ENCODE measurements at regions of chr2 and their contacts with region 1.

Region 1: GRCh38 chr2:143110758-143111428 is 18.3 kb upstream of the ARHGAP15 start:
- DNase-seq: peak; percentile 90
- H3K4me3 ChIP-seq: no peak overlapping the region
- H3K27ac ChIP-seq: no peak overlapping the region
- H3K4me1 ChIP-seq: peaks cover 7% of the 10 kb centered on the region
- CTCF ChIP-seq: peak; percentile 99

Region 2: DNA sequence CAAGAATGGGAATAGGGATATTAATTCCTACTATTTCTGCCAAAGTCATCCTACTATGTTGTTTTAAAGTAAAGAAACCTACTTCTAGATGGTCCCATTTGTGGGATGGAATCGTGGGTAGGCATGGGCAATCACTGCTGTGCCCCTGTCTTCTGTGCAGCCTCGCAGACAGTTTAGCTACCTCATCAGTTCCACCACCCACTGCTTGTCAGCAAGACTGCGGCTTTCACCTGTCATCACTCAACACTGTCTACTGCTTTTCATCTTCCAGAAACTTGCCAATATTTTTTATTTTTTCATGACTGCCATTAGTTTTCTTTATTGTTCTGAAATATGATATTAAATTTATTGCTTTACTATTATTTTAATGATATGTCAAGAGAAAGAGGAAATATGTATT is 601.5 kb before region 1 on chr2:
- CTCF ChIA-PET with region 1: no interaction called
- POLR2A ChIA-PET with region 1: no interaction called
- intact Hi-C with region 1: no loop called
- DNase-seq: no peak
- H3K4me3 ChIP-seq: no peak overlapping the region
- H3K27ac ChIP-seq: no peak overlapping the region
- H3K4me1 ChIP-seq: no peaks in the 10 kb centered on the region
- CTCF ChIP-seq: no peak

Region 3: DNA sequence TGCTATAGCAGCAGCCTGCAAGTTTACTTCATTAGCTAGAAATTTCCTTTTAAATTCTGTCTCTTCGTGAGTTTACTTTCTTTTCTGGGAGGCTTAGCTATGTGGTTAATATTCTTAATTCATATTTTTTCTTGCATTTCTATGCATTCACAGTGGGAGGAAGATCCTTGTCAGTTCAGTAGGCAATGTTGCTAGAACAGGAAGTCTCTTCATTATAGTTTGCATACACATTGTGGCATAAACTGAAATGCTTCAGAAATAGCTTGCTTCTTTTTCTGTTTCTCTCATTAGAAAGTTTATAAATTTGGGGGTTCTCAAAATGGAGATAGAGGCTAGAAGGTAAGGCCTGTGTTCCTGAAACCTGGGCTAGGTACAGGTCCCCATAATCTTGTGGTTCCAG is 10.2 kb after region 1 on chr2:
- CTCF ChIA-PET with region 1: interaction called, 3 read pairs
- POLR2A ChIA-PET with region 1: interaction called, 11 read pairs
- intact Hi-C with region 1: no loop called
- DNase-seq: peak; percentile 65
- H3K4me3 ChIP-seq: peak overlapping the region; percentile 28
- H3K27ac ChIP-seq: peak overlapping the region; percentile 31
- H3K4me1 ChIP-seq: peaks cover 16% of the 10 kb centered on the region
- CTCF ChIP-seq: no peak

Region 4: GRCh38 chr2:143217512-143218115 is 106.7 kb after region 1 on chr2:
- CTCF ChIA-PET with region 1: interaction called, 3 read pairs
- POLR2A ChIA-PET with region 1: interaction called, 8 read pairs
- intact Hi-C with region 1: loop called (anchors 1 kb)
- DNase-seq: no peak
- H3K4me3 ChIP-seq: no peak overlapping the region
- H3K27ac ChIP-seq: no peak overlapping the region
- H3K4me1 ChIP-seq: no peaks in the 10 kb centered on the region
- CTCF ChIP-seq: no peak

Region 5: GRCh38 chr2:143357966-143358365 is 247.1 kb after region 1 on chr2:
- CTCF ChIA-PET with region 1: no interaction called
- POLR2A ChIA-PET with region 1: no interaction called
- intact Hi-C with region 1: no loop called
- DNase-seq: no peak
- H3K4me3 ChIP-seq: no peak overlapping the region
- H3K27ac ChIP-seq: no peak overlapping the region
- H3K4me1 ChIP-seq: no peaks in the 10 kb centered on the region
- CTCF ChIP-seq: no peak